Activated T-helper 1 cell treated with anti-CD3 and anti-CD28 coated beads, Interleukin-12 subunit alpha, Interleukin-12 subunit beta, Interleukin-2, Interleukin-4 antibody, amounts not matched to agents 30 ng/mL and 10 ng/mL and 1 ng/mL, durations not matched to agents 14 hours and 24 hours and 36 hours (primary cell): ENCODE measurements at regions of chr7 and their contacts with region 1.

Region 1: GRCh38 chr7:148856891-148857290 is 27.2 kb downstream of the EZH2 start:
- DNase-seq: no peak
- H3K4me3 Mint-ChIP-seq: peak overlapping the region; percentile 40
- H3K27ac Mint-ChIP-seq: peak overlapping the region; percentile 85
- H3K4me1 Mint-ChIP-seq: peaks cover 46% of the 10 kb centered on the region
- H3K27me3 Mint-ChIP-seq: no peaks in the 10 kb centered on the region

Region 2: GRCh38 chr7:148575640-148576411 is 281.1 kb before region 1 on chr7:
- intact Hi-C with region 1: loop called (anchors 10 kb)
- DNase-seq: peak; percentile 47
- H3K4me3 Mint-ChIP-seq: no peak overlapping the region
- H3K27ac Mint-ChIP-seq: no peak overlapping the region
- H3K4me1 Mint-ChIP-seq: peaks cover 24% of the 10 kb centered on the region
- H3K27me3 Mint-ChIP-seq: peaks cover 3% of the 10 kb centered on the region

Region 3: GRCh38 chr7:148914208-148914777 is 57.4 kb after region 1 on chr7:
- intact Hi-C with region 1: loop called (anchors 1 kb)
- DNase-seq: peak; percentile 34
- H3K4me3 Mint-ChIP-seq: peak overlapping the region; percentile 77
- H3K27ac Mint-ChIP-seq: peak overlapping the region; percentile 94
- H3K4me1 Mint-ChIP-seq: peaks cover 63% of the 10 kb centered on the region
- H3K27me3 Mint-ChIP-seq: peaks cover 2% of the 10 kb centered on the region